Posterior vena cava (tissue), 2 donors: ENCODE measurements at regions of chr10 and their contacts with region 1.

Region 1: DNA sequence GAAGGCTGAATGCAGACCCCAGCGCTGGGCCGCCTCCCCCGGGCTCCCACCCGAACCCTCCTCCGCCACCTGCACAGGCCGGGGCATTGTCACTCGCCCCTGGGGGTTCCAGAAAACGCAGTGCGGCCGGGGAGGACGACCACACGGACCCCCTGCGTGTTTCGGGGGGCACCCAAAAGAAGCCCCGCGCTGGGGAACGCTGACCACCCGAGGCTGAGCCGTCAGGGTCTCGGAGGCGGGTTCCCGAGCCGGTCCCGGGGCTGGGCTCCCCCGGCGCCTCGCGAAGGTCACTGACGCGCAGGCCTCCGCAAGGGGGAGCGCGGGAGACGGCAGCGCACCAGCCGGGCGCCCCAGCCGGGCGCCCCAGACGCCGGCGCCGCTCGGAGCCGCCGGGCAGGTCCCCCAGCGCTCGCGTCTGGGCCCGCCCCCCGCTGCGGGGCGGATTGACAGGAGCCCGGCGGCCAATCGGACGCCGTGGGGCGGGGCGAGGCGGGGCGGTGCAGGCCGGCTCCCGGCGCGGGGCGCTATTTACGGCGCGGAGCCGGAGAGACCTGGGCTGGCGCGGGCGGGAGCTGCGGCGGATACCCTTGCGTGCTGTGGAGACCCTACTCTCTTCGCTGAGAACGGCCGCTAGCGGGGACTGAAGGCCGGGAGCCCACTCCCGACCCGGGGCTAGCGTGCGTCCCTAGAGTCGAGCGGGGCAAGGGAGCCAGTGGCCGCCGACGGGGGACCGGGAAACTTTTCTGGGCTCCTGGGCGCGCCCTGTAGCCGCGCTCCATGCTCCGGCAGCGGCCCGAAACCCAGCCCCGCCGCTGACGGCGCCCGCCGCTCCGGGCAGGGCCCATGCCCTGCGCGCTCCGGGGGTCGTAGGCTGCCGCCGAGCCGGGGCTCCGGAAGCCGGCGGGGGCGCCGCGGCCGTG is at the start of gene BAMBI:
- DNase-seq: peak; percentile 96
- total RNA-seq, gene BAMBI: 11.1 to 12.9 TPM

Region 2: DNA sequence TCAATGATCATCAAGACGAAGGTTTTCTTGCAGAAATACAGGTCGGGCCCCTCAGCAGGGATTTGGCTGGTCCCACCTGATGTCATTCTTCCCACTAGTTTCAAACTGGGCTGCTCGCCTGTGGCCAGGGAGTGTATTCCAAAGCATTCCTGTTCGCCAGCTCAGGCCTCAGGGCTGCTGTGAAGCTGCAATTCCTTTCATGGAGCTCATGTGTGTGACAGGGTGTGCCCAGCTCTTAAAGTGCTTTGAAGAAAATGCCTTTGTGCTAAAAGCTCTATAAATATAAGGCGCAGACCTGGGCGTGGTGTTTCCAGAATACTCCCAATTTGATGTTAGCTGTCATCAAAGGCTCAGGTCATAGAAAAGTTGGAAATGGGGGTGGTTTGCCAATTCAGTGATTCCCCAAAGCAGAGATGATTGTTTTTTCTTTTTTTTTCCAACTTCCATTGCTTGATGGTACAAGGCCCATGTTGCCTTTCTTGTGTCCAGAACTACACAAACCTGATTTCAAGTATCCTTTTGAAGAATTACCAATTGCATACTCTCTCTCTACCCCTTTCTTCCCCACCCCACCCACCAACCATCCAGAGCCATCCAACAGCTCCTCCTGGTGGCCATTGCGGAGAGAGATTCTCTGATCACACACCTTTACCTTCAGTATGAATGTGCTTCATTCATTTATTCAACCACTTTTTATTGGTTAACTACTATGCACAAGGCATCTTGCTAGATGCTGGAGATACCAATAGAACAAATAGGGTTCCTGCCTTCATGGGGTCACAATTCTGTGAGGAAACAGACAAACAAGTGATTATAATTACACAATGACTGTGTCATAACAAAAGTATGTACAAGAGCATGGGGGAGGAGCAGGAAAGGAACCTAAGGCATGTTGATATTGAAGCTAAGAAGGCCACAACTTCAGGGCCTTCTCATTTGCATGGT is 314.4 kb after region 1 on chr10:
- intact Hi-C with region 1: loop called (anchors 5 kb)
- DNase-seq: no peak

Region 3: DNA sequence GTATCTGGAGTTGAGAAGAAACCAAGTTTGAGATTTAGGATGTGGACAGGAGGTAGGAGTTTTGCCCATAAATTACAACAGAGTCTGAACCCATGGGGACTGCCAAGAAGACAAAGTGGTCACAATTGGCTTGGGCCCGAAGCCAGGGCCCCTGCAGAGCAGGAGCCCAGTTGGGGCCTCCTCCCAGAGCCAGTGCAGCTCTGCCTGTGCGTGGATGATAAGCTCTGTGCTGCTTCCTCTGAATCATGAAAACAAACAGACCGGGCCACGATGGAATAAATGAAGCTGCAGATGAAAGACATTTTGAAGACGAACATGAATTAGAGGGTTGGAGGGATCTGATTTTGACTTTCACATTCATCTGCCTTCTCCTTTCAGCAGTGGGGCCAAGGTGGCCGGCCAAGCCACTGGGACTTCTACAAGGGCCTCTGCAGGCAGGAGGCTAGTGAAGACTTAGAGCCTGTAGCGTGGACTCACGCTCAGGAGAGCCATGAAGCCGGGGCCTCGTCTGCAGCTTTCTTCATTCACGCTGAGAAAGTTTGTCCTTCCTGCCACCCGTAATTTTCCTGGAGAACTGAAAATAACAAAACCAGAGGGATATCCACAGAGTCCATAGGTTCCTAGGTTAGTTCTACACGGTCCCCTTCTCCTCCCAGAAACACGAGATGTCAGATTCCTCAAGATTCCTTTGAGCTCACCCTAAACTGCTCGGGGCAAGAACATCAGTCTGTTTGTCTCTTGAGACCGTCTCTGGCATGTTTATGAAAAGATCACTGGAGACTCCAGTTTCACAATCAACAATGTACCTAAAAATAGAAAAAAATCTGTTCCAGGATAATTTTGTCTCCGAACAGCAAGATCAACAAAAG is 455.0 kb after region 1 on chr10:
- intact Hi-C with region 1: loop called in 1 of 2 experiments (anchors 10 kb)
- DNase-seq: no peak